ENCODE measurements at regions of chr9 and their contacts with region 1.

Region 1: DNA sequence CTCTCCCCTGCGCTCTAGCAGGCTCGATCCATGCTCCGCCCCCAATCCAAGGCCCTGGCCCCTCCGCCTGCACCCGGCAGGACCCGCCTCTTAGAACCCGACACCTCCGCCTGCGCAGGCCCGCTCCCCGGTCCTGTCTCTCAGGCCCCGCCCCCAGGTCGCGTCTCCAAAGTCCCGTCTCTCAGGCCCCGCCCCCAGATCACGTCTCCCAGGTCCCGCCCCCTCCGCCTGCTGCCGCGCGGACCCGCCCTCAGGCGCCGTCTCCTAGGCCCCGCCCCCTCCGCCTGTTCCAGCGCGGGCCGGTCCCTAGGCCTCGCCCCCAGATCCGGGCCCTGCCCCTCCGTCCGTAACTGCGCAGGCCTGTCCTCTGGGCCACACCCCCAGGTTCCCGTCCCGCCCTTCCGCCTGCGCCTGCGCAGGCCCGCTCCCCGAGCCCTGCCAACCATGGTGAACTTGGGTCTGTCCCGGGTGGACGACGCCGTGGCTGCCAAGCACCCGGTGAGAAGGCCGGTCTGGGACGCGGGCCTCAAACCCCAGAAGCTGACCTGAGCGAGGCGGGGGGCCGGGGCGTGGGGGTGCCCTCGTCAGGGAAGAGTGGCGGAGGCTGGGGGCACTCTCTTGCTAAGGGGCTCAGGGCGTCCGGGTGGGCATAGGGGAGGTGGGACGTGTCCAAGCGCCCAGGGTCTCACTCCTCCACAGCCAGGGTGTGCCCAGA is at the start of gene TMEM141:
- DNase-seq: peak; percentile 94 to 100
- H3K4me3 ChIP-seq: peak within 1 kb of the TSS; percentile 68
- H3K27ac ChIP-seq: peak within 1 kb of the TSS; percentile 79
- H3K4me1 ChIP-seq: peaks cover 15% of the 10 kb centered on the region; the same call in 1 of the 2 replicates
- H3K27me3 ChIP-seq: no peaks in the 10 kb centered on the region
- CTCF ChIP-seq: no peak
- total RNA-seq, gene TMEM141: 83.6 and 124 TPM in 2 replicates

Region 2: DNA sequence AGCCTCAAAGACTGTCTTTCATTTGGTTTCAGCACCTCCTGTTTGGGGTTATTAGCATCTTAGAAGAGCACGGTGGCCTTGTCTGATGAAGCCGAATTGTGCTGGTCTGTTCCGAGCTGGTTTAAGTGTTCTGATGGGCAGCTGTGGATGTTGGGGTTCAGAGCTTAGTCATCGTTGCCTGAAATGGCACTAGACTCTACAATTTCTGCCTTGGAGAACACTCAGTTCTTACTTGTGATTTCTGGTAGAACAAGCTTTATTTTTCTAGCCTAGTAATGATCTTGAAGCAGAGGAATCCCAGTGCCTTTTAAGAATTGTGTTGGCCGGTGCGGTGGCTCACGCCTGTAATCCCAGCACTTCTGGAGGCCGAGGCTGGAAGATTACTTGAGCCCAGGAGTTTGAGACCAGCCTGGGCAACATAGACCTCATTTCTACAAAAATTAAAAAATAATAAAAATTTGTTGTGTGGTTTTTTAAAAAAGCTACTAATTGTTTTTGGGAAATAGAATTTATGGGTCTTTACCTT is 145.6 kb after region 1 on chr9:
- CTCF ChIA-PET with region 1: interaction called, 3 read pairs
- POLR2A ChIA-PET with region 1: interaction called, 11 read pairs
- intact Hi-C with region 1: no loop called
- DNase-seq: no peak
- H3K4me3 ChIP-seq: no peak overlapping the region
- H3K27ac ChIP-seq: no peak overlapping the region
- H3K4me1 ChIP-seq: peaks cover 3% of the 10 kb centered on the region
- H3K27me3 ChIP-seq: no peaks in the 10 kb centered on the region
- CTCF ChIP-seq: no peak

Region 3: DNA sequence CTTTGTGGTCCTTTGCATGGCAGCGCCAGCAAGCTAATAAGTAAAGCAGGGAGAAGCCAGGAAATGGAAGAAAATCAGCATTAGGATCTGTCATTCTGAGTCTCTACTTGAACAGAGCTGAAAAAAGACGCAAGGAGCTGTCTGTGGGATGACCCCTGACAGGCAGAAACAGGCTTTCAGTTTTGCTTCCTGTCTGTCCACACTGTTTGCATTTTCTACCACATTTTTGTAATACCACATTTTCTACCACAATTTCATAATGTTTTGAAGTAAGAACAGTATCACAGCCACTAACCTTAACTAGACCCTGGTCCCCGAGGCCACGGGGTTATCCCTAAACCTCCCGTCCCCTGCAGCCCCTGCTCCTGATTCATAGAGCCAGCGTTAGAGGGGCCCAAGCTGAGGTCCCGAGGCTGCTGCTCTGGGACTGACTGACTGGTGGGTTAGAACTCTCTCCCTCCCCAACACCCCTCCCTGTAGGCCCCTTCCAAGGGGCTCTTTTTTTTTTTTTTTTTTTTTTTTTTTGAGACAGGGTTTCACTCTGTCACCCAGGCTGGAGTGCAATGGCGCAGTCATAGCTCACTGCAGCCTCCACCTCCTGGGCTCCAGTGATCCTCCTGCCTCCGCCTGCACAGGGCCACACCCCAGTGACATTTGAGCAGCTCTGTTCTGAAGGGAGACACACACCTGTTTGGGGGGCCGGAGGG is 209.2 kb after region 1 on chr9:
- CTCF ChIA-PET with region 1: interaction called, 7 read pairs
- POLR2A ChIA-PET with region 1: no interaction called
- intact Hi-C with region 1: loop called (anchors 2 kb)
- DNase-seq: no peak
- H3K4me3 ChIP-seq: no peak overlapping the region
- H3K27ac ChIP-seq: no peak overlapping the region
- H3K4me1 ChIP-seq: peaks cover 30% of the 10 kb centered on the region
- H3K27me3 ChIP-seq: no peaks in the 10 kb centered on the region
- CTCF ChIP-seq: no peak

Region 4: GRCh38 chr9:137034863-137035761 is 244.0 kb after region 1 on chr9:
- CTCF ChIA-PET with region 1: no interaction called
- POLR2A ChIA-PET with region 1: interaction called, 11 read pairs
- intact Hi-C with region 1: loop called (anchors 1 kb)
- DNase-seq: peak; percentile 70 to 88
- H3K4me3 ChIP-seq: peak overlapping the region; percentile 29; the same call in 1 of the 2 replicates
- H3K27ac ChIP-seq: no peak overlapping the region
- H3K4me1 ChIP-seq: peaks cover 9% of the 10 kb centered on the region
- H3K27me3 ChIP-seq: no peaks in the 10 kb centered on the region
- CTCF ChIP-seq: peak; percentile 87

Measured in PC-9 (cell line).